Endothelial cell of umbilical vein (primary cell): ENCODE measurements at regions of chr6 and their contacts with region 1.

Region 1: DNA sequence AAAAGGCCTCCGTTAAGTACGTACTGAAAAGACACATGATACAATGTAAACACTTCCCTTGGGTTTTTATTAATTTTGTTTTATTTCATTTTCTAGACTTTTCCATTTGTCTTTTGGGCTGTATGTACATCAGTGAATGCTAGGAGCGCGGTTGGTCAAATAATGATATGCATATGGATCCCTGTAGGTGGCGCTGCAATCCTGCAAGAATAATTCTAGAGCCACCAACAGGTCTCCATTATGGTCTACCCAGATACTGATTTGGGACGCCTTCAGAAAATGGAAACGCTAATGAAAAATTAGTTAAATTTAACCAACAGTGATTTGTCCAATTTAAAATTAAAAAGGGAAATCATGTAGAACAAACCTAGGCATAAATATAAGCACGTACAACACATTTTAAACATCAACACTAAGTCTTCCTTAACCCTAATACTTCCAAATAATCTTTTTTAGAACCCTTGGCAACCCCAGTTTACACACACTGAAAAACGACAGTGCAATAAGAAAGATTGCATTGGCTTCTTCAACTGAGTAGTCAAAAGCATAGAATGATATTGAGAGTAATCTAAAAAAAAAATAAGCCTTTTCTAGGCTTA is 433.5 kb downstream of the RFPL4B start:
- DNase-seq: peak; percentile 87
- H3K4me3 ChIP-seq: no peak overlapping the region
- H3K27ac ChIP-seq: peak overlapping the region; percentile 19
- H3K4me1 ChIP-seq: peaks cover 6% of the 10 kb centered on the region
- H3K27me3 ChIP-seq: no peaks in the 10 kb centered on the region
- CTCF ChIP-seq: peak; percentile 53 to 67
- POLR2A ChIP-seq: no peak

Region 2: GRCh38 chr6:112337209-112337638 is 443.4 kb before region 1 on chr6:
- CTCF ChIA-PET with region 1: interaction called, 3 read pairs
- POLR2A ChIA-PET with region 1: no interaction called
- dilution Hi-C with region 1: no loop called
- intact Hi-C with region 1: loop called (anchors 5 kb)
- DNase-seq: peak; percentile 89
- H3K4me3 ChIP-seq: no peak overlapping the region
- H3K27ac ChIP-seq: no peak overlapping the region
- H3K4me1 ChIP-seq: peaks cover 8% of the 10 kb centered on the region
- H3K27me3 ChIP-seq: no peaks in the 10 kb centered on the region
- CTCF ChIP-seq: peak; percentile 75 to 85
- POLR2A ChIP-seq: peak; percentile 62

Region 3: GRCh38 chr6:112488238-112488637 is 292.4 kb before region 1 on chr6:
- CTCF ChIA-PET with region 1: no interaction called
- POLR2A ChIA-PET with region 1: no interaction called
- dilution Hi-C with region 1: no loop called
- intact Hi-C with region 1: no loop called
- DNase-seq: no peak
- H3K4me3 ChIP-seq: no peak overlapping the region
- H3K27ac ChIP-seq: no peak overlapping the region
- H3K4me1 ChIP-seq: peaks cover 13% of the 10 kb centered on the region
- H3K27me3 ChIP-seq: no peaks in the 10 kb centered on the region
- CTCF ChIP-seq: no peak
- POLR2A ChIP-seq: no peak

Region 4: DNA sequence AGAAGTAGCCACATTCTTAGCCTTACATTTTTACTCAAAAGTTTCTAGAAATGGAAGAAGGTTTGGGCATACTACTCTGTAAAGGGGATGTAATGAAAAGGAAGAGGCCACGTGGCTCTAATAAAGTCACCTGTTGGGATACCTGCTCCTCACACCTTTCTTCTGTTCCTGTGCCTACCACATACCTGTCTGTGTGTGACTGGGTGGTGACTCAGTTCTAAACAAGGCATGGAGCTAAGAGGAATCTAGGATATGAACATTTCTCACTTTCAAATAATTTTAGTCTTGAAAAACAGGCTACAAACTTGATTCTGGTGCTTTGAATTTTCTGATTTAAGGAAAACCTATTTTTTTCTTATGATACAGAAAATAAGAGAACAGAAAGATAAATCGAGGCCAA is 69.9 kb before region 1 on chr6:
- CTCF ChIA-PET with region 1: no interaction called
- POLR2A ChIA-PET with region 1: no interaction called
- dilution Hi-C with region 1: no loop called
- intact Hi-C with region 1: no loop called
- DNase-seq: no peak
- H3K4me3 ChIP-seq: no peak overlapping the region
- H3K27ac ChIP-seq: no peak overlapping the region
- H3K4me1 ChIP-seq: no peaks in the 10 kb centered on the region
- H3K27me3 ChIP-seq: no peaks in the 10 kb centered on the region
- CTCF ChIP-seq: no peak
- POLR2A ChIP-seq: no peak

Region 5: GRCh38 chr6:112833581-112834131 is 53.1 kb after region 1 on chr6:
- CTCF ChIA-PET with region 1: no interaction called
- POLR2A ChIA-PET with region 1: no interaction called
- dilution Hi-C with region 1: no loop called
- intact Hi-C with region 1: no loop called
- DNase-seq: peak; percentile 7
- H3K4me3 ChIP-seq: no peak overlapping the region
- H3K27ac ChIP-seq: no peak overlapping the region
- H3K4me1 ChIP-seq: peaks cover 8% of the 10 kb centered on the region
- H3K27me3 ChIP-seq: no peaks in the 10 kb centered on the region
- CTCF ChIP-seq: no peak
- POLR2A ChIP-seq: no peak

Region 6: DNA sequence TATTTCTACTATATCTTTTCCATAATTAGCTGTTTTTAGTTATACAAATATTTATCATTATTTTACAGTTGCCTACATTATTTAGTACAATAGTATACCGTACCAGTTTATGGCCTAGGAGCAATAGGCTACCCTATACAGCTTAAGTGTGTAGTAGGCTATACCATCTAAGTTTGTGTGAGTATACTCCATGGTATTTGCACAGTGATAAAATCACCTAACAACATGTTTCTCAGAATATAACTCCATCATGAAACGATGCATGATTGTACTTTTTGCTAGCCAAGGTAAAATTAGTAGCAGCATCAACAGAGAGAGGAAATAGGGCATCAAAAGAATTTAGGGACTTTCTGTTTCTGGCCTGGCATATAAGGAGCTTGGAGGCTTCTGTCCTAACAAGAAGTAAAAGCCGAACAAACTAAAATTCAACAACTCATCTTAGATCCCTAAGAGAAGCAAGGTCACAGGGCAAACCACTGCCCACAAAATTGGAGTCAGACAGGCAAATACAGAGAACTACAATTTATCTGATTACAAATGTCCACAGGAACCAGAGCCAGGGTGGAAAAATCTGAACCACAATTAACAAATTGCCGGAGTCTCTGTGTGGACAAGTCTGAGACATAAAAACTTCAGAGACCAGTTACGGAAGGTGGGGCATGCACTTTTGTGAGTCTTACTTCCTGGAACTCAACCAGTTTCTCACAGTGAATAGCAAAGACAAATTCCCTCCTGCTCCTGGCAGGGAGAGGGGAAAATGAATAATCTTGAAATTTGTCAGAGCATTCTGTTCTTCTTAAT is 238.0 kb after region 1 on chr6:
- CTCF ChIA-PET with region 1: no interaction called
- POLR2A ChIA-PET with region 1: no interaction called
- dilution Hi-C with region 1: no loop called
- intact Hi-C with region 1: loop called (anchors 1 kb)
- DNase-seq: peak; percentile 96
- H3K4me3 ChIP-seq: peak overlapping the region in 1 of 3 experiments; percentile 5
- H3K27ac ChIP-seq: peak overlapping the region; percentile 96
- H3K4me1 ChIP-seq: peaks cover 24% of the 10 kb centered on the region
- H3K27me3 ChIP-seq: no peaks in the 10 kb centered on the region
- CTCF ChIP-seq: no peak
- POLR2A ChIP-seq: no peak

Region 7: DNA sequence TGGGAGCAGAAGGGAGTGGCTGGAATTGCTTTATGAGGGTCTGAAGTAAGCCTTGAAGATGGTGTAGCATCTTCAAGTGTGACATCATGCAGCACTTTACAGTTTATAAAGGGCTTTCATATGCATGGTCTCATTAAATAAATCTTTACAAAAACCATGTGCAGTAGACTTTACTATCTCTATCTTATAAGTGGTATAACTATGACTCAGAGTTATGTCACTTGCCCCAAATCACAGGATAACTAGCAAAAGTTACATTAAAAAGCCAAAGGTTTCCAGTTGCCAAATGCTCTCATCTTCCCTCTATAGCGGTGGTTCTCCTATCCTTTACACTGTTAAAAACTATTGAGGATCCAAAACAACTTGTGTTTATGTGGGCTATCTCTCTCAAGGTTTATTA is 388.9 kb after region 1 on chr6:
- CTCF ChIA-PET with region 1: no interaction called
- POLR2A ChIA-PET with region 1: no interaction called
- dilution Hi-C with region 1: no loop called
- intact Hi-C with region 1: no loop called
- DNase-seq: no peak
- H3K4me3 ChIP-seq: no peak overlapping the region
- H3K27ac ChIP-seq: no peak overlapping the region
- H3K4me1 ChIP-seq: peaks cover 6% of the 10 kb centered on the region
- H3K27me3 ChIP-seq: no peaks in the 10 kb centered on the region
- CTCF ChIP-seq: no peak
- POLR2A ChIP-seq: no peak

Region 8: DNA sequence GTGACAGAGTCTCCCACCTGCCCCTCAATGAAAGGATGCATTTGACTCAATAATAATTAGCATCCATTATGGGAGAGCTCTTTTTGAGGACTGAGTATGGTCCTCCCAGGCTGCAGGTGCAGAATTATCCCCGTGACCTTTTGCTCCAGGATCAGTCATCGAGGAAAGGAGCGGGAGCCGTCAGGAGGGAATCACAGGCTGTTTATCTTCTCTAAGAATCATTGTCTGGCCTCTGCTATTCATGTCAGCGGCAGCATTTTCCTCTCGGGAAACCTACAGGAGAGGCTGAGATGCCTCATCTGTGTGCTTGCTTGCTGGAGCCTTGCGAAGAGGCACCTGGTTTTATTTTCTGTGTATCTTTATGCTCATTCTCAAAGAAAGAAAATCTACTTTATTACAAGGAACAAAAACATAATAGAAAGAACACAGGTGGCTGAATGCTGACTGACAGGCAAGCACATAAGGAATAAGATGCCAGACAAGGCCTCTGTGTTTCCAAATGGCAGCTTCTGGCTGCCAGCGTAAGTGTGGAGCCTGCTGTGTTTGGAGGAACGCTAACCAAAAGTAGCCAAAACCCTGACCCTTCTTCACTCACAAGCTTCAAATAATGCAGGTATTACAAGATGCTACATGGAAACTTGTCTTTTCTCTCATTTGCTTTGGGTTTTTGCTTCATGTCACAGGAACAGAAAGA is 537.4 kb after region 1 on chr6:
- CTCF ChIA-PET with region 1: no interaction called
- POLR2A ChIA-PET with region 1: no interaction called
- dilution Hi-C with region 1: no loop called
- intact Hi-C with region 1: loop called (anchors 5 kb)
- DNase-seq: no peak
- H3K4me3 ChIP-seq: no peak overlapping the region
- H3K27ac ChIP-seq: peak overlapping the region; percentile 3
- H3K4me1 ChIP-seq: peaks cover 14% of the 10 kb centered on the region
- H3K27me3 ChIP-seq: no peaks in the 10 kb centered on the region
- CTCF ChIP-seq: no peak
- POLR2A ChIP-seq: no peak

Region 9: GRCh38 chr6:113564371-113565161 is 784.0 kb after region 1 on chr6:
- CTCF ChIA-PET with region 1: no interaction called
- POLR2A ChIA-PET with region 1: no interaction called
- dilution Hi-C with region 1: no loop called
- intact Hi-C with region 1: loop called (anchors 5 kb)
- DNase-seq: peak; percentile 56
- H3K4me3 ChIP-seq: no peak overlapping the region
- H3K27ac ChIP-seq: no peak overlapping the region
- H3K4me1 ChIP-seq: peaks cover 21% of the 10 kb centered on the region
- H3K27me3 ChIP-seq: no peaks in the 10 kb centered on the region
- CTCF ChIP-seq: no peak
- POLR2A ChIP-seq: no peak

Region 10: DNA sequence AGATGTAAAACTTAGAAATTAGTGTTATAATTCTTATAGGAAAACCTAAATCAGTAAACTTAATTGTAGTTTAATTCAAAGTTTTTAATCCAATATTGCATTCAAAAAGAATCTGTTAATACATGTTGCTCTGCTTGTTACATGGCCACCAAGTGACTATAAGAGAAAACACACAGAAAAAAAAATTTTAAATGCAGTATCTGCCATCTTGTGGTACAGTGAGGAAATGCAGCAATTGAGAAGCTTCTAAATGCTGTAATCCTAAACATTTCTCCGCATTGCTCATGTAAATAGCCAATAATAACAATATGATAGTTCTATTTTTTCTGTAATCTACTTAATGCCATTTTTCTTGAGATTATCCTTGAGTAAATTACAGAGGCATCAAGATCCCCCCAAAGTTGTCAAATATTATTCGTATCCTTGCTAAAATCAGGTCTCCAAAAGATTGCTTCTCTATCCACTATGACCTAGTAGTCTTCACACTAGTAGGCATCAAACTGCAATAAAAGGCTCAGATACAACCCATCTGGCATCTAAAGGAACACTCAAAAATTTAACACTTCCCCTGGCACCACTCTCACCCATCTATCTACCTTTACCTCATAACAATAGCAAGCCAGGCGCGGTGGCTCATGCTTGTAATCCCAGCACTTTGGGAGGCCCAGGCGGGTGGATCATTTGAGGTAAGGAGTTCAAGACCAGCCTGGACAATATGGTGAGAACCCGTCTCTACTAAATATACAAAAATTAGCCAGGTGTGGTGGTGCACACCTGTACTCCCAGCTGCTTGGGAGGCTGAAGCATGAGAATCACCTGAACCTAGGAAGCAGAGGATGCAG is 1155.7 kb after region 1 on chr6:
- CTCF ChIA-PET with region 1: interaction called, 5 read pairs
- POLR2A ChIA-PET with region 1: no interaction called
- dilution Hi-C with region 1: no loop called
- intact Hi-C with region 1: loop called (anchors 1 kb)
- DNase-seq: peak; percentile 86
- H3K4me3 ChIP-seq: no peak overlapping the region
- H3K27ac ChIP-seq: no peak overlapping the region
- H3K4me1 ChIP-seq: no peaks in the 10 kb centered on the region
- H3K27me3 ChIP-seq: no peaks in the 10 kb centered on the region
- CTCF ChIP-seq: peak; percentile 52
- POLR2A ChIP-seq: no peak